ENCODE measurements at regions of chr6 and their contacts with region 1.

Region 1: GRCh38 chr6:90005048-90005827 is 111.0 kb downstream of the GJA10 start:
- DNase-seq: no peak
- CTCF ChIP-seq: no peak

Region 2: DNA sequence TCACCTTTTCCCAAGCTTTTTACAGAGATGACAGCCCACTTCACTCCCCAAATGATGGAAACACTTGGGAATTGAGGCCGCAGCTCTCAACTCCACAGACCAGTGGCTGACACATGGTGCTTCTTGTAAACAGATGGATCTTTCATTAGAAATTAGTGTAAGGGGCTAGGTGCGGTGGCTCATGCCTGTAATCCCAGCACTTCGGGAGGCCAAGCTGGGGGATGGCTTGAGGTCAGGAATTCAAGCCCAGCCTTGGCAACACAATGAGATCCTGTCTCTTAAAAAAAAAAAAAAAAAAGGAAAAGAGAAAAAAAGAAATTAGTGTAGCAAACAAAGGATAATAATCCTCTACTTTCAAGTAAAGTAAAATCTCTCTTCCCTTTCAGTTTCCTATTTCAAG is 95.2 kb before region 1 on chr6:
- CTCF ChIA-PET with region 1: no interaction called
- POLR2A ChIA-PET with region 1: no interaction called
- DNase-seq: no peak
- CTCF ChIP-seq: no peak

Region 3: DNA sequence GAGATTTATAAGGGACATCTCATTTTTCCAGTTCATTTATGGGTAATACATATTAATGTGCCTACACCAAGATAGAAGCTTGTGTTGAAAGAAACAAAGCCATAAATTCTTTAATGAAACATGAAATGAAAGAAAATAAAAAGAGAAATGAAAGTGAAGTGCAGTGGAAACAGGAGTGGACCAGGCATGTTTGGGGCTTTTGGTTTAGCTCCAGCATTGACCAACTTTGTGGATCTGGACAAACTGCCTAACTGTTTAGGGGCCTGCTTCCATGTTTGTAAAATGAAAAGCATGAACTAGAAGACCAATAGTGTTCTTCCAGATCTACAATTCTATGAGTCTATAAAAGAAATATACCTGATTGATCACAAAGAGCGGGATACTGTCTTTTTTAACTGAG is 14.0 kb after region 1 on chr6:
- CTCF ChIA-PET with region 1: interaction called, 10 read pairs
- POLR2A ChIA-PET with region 1: no interaction called
- DNase-seq: no peak
- CTCF ChIP-seq: no peak